OCI-LY7 (cell line): ENCODE measurements at regions of chr17 and their contacts with region 1.

Region 1: DNA sequence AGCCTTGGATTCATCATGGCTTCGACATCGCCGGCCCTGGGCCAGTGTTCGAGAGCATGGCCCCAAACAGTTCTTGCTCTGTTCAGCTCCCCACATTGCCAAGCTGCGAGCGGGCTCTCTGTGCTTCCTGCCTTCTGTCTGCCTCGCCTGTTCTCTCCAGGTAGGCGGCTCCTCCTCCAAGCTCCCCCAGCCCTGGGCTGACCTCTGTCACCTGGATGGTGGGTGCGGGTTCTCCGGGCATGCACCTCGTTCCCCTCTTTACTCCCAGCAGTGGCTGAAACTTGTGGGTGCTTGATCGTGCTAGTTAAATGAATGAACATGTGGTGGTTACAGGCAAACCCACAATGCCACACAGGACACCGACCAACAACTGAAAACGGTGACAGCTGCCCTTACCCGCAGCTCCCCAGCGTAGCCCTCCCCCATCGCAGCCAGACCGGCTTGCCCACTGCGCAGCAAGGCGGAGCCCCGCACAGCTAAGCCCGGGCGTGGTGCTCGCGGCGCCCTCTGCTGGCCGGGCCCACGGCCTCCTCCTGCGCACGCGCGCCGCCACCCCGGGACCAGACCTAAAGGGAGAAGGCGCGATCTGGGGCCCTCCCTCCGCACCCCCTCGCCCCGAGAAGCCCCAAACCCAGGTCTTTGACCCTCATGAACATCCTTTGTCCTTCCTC is 23.0 kb upstream of the EIF1 start:
- DNase-seq: peak; percentile 90
- H3K4me3 ChIP-seq: peak overlapping the region; percentile 62
- H3K27ac ChIP-seq: peak overlapping the region; percentile 84
- H3K4me1 ChIP-seq: peaks cover 31% of the 10 kb centered on the region
- CTCF ChIP-seq: peak; percentile 95

Region 2: DNA sequence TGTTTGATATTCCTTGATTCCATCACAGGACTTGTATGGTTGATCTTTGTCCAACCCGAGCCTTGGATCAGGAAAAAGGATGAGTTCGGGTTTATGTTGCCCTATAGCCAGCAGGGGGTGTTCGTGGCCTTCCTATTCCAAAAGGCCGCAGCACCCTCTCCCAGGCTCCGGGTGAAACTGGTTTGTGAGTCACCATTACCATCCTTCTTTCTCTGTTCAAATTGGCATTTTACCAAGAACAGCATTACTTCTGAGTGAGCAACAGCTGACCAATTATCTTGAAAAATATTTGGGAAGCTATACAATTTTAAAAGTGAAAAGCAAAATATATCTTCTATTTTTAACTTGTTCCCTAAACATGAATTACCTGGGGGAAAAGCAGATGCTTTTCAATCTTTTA is 756.4 kb before region 1 on chr17:
- CTCF ChIA-PET with region 1: no interaction called
- POLR2A ChIA-PET with region 1: no interaction called
- intact Hi-C with region 1: loop called (anchors 5 kb)
- DNase-seq: peak; percentile 56
- H3K4me3 ChIP-seq: no peak overlapping the region
- H3K27ac ChIP-seq: no peak overlapping the region
- H3K4me1 ChIP-seq: no peaks in the 10 kb centered on the region
- CTCF ChIP-seq: peak; percentile 86

Region 3: DNA sequence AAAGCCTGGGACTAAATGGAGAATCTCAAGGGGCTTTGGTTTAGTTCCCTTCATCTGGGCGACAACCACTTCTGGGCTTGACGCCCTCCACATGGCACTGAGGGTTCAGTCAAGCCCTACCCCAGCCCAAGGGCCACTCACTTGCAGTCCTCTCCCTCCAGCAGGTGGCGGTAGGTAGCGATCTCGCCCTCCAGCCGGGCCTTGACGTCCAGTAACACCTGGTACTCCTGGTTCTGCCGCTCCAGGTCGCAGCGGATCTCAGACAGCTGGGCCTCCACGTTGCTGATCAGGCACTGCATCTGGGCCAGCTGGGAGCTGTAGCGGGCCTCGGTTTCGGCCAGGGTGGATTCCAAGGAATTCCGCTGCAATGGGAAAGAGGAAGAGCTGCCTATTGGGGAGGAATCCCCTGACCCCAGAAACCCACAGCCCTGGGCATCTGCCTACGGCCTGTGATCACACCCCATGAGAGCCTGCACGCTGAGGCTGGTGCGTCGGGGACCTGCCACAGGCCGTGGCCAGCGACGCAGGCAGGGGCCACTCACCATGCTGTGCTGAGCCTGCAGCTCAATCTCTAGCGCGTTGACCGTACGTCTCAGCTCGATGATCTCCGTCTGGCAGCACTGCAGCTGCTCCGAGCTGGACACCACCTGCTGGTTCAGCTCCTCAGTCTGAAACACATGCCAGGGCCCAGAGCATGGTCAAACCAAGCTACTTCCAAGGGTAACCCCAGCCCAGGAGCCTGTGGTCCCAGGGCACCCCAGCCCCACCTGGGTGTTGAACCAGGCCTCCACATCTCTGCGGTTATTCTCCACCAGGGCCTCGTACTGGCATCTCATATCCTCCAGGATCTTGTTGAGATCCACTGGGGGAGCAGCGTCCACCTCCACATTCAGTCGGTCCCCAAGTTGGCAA is 178.6 kb before region 1 on chr17:
- CTCF ChIA-PET with region 1: no interaction called
- POLR2A ChIA-PET with region 1: no interaction called
- intact Hi-C with region 1: loop called (anchors 5 kb)
- DNase-seq: peak; percentile 35
- H3K4me3 ChIP-seq: no peak overlapping the region
- H3K27ac ChIP-seq: no peak overlapping the region
- H3K4me1 ChIP-seq: no peaks in the 10 kb centered on the region
- CTCF ChIP-seq: peak; percentile 78

Region 4: GRCh38 chr17:41648411-41649195 is 17.1 kb before region 1 on chr17:
- CTCF ChIA-PET with region 1: interaction called, 26 read pairs
- POLR2A ChIA-PET with region 1: interaction called, 7 read pairs
- intact Hi-C with region 1: loop called (anchors 1 kb)
- DNase-seq: peak; percentile 88
- H3K4me3 ChIP-seq: peak overlapping the region; percentile 60
- H3K27ac ChIP-seq: no peak overlapping the region
- H3K4me1 ChIP-seq: peaks cover 10% of the 10 kb centered on the region
- CTCF ChIP-seq: peak; percentile 90

Region 5: DNA sequence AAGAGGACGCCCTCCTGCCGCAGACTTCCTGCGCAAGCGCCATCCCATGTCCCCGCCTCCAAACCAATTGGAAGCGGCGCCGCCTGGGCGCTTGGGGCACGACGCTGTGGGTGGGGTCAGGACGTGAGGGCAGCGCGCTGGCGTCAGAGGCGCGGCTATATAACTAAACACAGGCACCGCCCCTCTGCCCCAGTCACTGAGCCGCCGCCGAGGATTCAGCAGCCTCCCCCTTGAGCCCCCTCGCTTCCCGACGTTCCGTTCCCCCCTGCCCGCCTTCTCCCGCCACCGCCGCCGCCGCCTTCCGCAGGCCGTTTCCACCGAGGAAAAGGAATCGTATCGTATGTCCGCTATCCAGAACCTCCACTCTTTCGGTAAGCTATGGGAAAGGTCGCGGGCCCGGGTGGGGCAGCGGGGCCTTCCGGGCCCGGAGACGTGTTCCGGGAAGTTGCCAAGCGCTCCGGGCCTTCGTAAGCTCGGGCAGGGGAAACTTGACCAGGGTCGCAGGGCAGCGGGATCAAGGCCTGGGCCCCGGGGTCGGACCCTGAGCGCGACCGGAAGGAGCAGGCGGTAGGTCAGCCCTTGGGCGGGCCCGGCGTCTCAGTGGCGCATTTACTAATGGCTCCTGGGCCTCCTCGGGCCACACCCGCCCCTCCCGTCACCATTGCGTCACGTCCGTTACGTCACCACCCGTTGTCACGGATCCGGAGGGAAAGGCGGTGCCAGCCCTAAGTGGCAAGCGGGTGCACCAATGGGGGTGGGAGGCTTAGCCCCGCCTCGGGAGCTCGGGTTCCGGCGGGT is 23.2 kb after region 1 on chr17 and contains the start of gene EIF1:
- CTCF ChIA-PET with region 1: interaction called, 3 read pairs
- POLR2A ChIA-PET with region 1: interaction called, 13 read pairs
- intact Hi-C with region 1: loop called (anchors 1 kb)
- DNase-seq: peak; percentile 100
- H3K4me3 ChIP-seq: peak within 1 kb of the TSS; percentile 86
- H3K27ac ChIP-seq: peak within 1 kb of the TSS; percentile 88
- H3K4me1 ChIP-seq: peaks cover 20% of the 10 kb centered on the region
- CTCF ChIP-seq: no peak
- total RNA-seq, gene EIF1: 123 and 145 TPM in 2 replicates